Activated naive CD8-positive, alpha-beta T cell treated with anti-CD3 and anti-CD28 coated beads, Interleukin-2, amount 10 ng/mL, durations not matched to agents 7 days and 5 days (primary cell): ENCODE measurements at regions of chr17 and their contacts with region 1.

Region 1: GRCh38 chr17:2383628-2384167 is 17.2 kb downstream of the MNT start:
- DNase-seq: no peak
- ATAC-seq: no peak
- H3K4me3 Mint-ChIP-seq: no peak overlapping the region
- H3K27ac Mint-ChIP-seq: no peak overlapping the region
- H3K4me1 Mint-ChIP-seq: peaks cover 7% of the 10 kb centered on the region
- H3K27me3 Mint-ChIP-seq: no peaks in the 10 kb centered on the region

Region 2: GRCh38 chr17:2401426-2402221 is 17.9 kb after region 1 on chr17:
- POLR2A ChIA-PET with region 1: interaction called, 20 read pairs
- DNase-seq: peak; percentile 98
- ATAC-seq: peak; percentile 50
- H3K4me3 Mint-ChIP-seq: peak overlapping the region; percentile 93
- H3K27ac Mint-ChIP-seq: peak overlapping the region; percentile 98
- H3K4me1 Mint-ChIP-seq: peaks cover 40% of the 10 kb centered on the region
- H3K27me3 Mint-ChIP-seq: no peaks in the 10 kb centered on the region